GM12878 (cell line): ENCODE measurements at regions of chr10 and their contacts with region 1.

Region 1: DNA sequence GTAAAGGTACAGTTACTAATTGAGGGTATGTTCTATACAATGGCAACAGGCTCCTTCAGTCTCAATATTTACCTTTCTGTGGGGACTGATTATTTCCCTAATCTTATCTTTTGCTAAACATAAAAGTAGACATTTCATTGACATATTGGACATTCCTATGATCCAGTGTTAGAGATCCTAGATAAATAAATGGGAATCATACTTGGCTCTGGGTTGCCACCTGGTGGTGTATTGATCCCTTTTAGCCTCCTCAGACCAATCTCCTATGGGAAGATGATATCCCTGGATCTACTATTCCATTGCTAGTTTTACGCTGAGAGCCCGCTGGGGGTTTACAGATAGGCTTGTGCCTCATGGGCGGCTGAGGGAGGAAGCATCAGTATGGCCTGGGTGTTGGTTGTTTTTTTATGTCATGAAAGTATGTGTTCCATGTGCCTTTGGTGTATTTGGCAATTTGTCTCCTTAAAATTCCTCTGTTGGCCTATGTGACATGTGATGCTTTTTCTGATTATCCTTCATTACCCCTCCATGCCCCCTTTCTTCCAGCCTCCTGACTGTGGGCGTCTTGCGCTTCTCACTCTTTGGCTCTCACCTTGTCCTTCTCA is 18.8 kb downstream of the CELF2 start:
- DNase-seq: no peak
- ATAC-seq: no peak
- H3K4me3 ChIP-seq: no peak overlapping the region
- H3K27ac ChIP-seq: no peak overlapping the region
- H3K4me1 ChIP-seq: no peaks in the 10 kb centered on the region
- H3K27me3 ChIP-seq: 0 out of 4 replicates have a peak, but pooled peaks cover 0 to 2% of the 10 kb centered on the region in 2 experiments
- CTCF ChIP-seq: peak; percentile 19 to 34 (median 27); a peak in 4 of 6 replicates
- EP300 ChIP-seq: no peak
- POLR2A ChIP-seq: no peak
- RAD21 ChIP-seq: peak; percentile 20; the same call in 1 of the 2 replicates

Region 2: GRCh38 chr10:10855151-10855581 is 181.3 kb before region 1 on chr10:
- CTCF ChIA-PET with region 1: no interaction called
- POLR2A ChIA-PET with region 1: no interaction called
- RAD21 ChIA-PET with region 1: no interaction called
- SMC1A ChIA-PET with region 1: no interaction called
- in situ Hi-C with region 1: no loop called
- intact Hi-C with region 1: no loop called
- DNase-seq: no peak
- ATAC-seq: peak; percentile 55
- H3K4me3 ChIP-seq: no peak overlapping the region
- H3K27ac ChIP-seq: no peak overlapping the region
- H3K4me1 ChIP-seq: peaks cover 7% of the 10 kb centered on the region
- H3K27me3 ChIP-seq: no peaks in the 10 kb centered on the region
- CTCF ChIP-seq: no peak
- EP300 ChIP-seq: no peak
- POLR2A ChIP-seq: no peak
- RAD21 ChIP-seq: no peak

Region 3: GRCh38 chr10:10959666-10960065 is 76.8 kb before region 1 on chr10:
- CTCF ChIA-PET with region 1: no interaction called
- POLR2A ChIA-PET with region 1: no interaction called
- RAD21 ChIA-PET with region 1: no interaction called
- SMC1A ChIA-PET with region 1: no interaction called
- in situ Hi-C with region 1: no loop called
- intact Hi-C with region 1: no loop called
- DNase-seq: peak; percentile 3
- ATAC-seq: peak; percentile 58
- H3K4me3 ChIP-seq: no peak overlapping the region
- H3K27ac ChIP-seq: no peak overlapping the region
- H3K4me1 ChIP-seq: no peaks in the 10 kb centered on the region
- H3K27me3 ChIP-seq: peaks cover 3 to 4% of the 10 kb centered on the region in 2 experiments; a peak in 3 of 4 replicates
- CTCF ChIP-seq: no peak
- EP300 ChIP-seq: no peak
- POLR2A ChIP-seq: no peak
- RAD21 ChIP-seq: no peak

Region 4: DNA sequence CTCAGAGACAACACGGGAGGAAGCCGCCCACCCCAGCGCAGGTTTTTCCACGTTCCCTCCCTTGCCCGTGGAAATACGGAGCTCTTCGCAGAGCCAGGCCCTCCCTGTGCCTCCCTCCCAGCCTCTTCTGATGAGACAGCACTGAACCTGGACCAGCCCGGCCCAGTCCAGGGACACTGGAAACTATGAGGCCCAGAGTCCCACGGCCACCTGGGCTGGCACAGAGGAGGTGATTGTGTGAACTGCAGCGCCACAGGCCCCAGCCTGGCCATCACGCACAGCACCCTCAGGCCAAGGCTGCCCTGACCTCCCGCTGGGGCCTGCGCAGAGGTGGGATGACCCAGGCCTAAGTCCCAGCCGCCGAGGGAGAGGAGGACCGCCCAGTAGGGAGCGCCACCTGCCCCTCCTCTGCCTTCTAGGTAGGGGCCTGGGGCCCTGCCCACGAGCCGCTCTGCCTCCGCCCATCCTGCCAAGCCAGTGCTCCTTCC is 843.7 kb after region 1 on chr10:
- CTCF ChIA-PET with region 1: no interaction called
- POLR2A ChIA-PET with region 1: interaction called, 10 read pairs
- RAD21 ChIA-PET with region 1: no interaction called
- SMC1A ChIA-PET with region 1: no interaction called
- in situ Hi-C with region 1: no loop called
- intact Hi-C with region 1: no loop called
- DNase-seq: no peak
- ATAC-seq: no peak
- H3K4me3 ChIP-seq: no peak overlapping the region
- H3K27ac ChIP-seq: no peak overlapping the region
- H3K4me1 ChIP-seq: no peaks in the 10 kb centered on the region; the same call in 1 of the 2 replicates
- H3K27me3 ChIP-seq: no peaks in the 10 kb centered on the region
- CTCF ChIP-seq: no peak
- EP300 ChIP-seq: no peak
- POLR2A ChIP-seq: no peak
- RAD21 ChIP-seq: no peak